Activated CD4-positive, alpha-beta T cell treated with anti-CD3 and anti-CD28 coated beads, Interleukin-2, amount 10 ng/mL, durations not matched to agents 24 days and 14 days (primary cell): ENCODE measurements at regions of chr3 and their contacts with region 1.

Region 1: GRCh38 chr3:129120254-129121004 is 1.2 kb downstream of the RAB43 start:
- DNase-seq: peak; percentile 98
- H3K4me3 Mint-ChIP-seq: peak overlapping the region; percentile 94
- H3K27ac Mint-ChIP-seq: peak overlapping the region; percentile 99
- H3K4me1 Mint-ChIP-seq: peaks cover 51% of the 10 kb centered on the region
- H3K27me3 Mint-ChIP-seq: no peaks in the 10 kb centered on the region

Region 2: DNA sequence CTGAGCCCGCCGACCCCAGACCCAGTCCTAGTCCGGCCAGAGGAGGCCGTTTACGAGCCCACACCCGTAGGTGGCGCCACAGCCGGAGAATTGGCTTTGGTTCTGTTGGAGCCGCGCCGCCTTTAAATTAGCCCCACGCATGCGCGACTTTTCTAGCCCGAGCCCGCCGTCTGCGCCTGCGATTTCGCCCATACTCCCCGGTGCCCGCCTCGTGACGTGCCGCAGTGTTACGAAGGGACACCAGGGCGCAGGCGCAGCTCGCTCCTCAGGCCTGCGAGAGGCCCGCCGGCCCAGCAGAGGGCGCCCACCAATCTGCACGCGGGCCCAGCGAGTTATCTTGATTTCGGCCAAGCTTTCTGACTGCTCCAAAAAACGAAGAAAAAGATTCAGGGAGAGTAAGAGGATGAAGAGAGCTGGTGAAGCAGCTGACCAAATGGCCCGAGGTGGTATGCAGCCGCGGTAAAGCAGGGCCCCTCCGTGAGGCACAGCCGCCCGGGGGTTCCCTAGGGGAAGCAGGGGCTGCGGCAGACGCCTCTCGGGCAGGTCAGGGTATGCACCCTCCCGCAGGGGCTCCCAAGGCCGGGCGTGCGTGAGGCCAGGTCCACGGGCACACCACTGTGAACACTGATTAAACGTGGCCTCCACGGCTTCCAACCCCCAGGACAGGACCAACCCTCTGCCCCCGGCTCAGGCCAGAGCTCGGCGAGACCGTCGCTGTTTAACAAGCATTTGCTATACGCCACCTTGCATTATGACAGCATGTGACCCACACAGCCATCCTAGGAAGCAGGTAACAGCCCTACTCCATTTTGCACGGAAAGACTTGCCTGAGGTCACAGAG is 502.7 kb before region 1 on chr3:
- intact Hi-C with region 1: loop called (anchors 5 kb)
- DNase-seq: peak; percentile 100
- H3K4me3 Mint-ChIP-seq: peak overlapping the region; percentile 95
- H3K27ac Mint-ChIP-seq: peak overlapping the region; percentile 96
- H3K4me1 Mint-ChIP-seq: peaks cover 34% of the 10 kb centered on the region
- H3K27me3 Mint-ChIP-seq: no peaks in the 10 kb centered on the region

Region 3: DNA sequence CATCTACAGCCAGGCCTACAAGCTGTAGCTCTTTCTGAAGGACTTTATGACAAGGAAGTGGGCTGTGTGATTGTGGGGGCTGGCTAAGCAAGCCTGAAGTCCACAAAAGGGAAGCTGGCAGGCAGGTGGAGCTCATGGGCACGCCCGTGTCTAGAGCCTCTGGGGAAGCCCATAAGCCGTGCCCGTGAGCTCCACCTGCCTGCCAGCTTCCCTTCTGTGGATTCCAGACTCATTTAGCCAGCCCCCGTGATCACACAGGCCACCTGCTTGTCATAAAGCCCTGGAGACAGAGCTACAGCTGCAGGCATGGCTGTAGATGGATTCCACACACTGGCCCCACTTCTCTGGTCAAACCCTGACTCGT is 104.1 kb before region 1 on chr3:
- intact Hi-C with region 1: loop called (anchors 5 kb)
- DNase-seq: peak; percentile 85
- H3K4me3 Mint-ChIP-seq: peak overlapping the region; percentile 80
- H3K27ac Mint-ChIP-seq: peak overlapping the region; percentile 95
- H3K4me1 Mint-ChIP-seq: peaks cover 26% of the 10 kb centered on the region
- H3K27me3 Mint-ChIP-seq: no peaks in the 10 kb centered on the region

Region 4: DNA sequence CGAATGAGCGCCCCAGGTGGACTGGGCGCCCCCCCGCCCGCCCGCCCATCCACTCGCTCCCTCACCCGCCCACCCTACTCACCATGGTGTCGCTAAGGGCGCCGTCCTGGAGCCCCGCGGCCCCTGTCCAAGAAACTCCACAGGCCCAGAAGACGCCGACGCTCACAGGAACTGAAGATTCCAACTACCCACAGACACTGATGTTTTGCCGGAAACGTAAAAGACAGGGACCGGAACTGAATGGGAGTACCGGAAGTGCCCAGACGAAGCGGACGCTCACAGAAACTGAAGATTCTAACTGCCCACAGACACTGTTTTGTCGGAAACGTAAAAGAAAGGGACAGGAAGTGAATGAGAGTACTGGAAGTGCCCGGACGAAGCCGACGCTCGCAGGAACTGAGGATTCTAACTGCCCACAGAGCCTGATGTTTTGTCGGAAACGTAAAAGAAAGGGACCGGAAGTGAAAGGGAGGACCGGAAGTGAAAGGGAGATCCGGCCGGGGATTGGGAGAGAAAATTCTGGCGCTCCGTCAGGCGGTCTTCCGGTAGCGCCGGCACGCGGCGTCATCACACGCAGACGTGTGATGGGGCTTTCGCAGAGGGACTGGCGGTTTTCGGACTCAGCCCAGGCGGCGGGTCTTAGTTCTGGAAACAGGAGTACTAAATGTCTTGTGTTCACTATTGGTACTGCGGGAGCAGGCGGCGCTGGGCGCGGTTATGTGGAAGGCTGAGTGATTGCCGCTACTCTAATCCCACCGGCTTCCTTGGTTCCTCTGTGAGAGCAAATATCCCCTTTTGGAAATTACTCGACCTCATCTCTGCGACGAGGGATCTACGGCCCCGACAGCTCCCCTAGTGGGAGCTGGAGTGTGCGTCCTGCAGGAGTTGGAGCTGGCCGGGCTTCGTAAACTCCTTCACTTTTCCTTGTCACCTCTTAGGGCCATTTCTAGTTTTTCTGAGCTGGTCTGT is 40.7 kb after region 1 on chr3 and contains the start of gene ISY1:
- intact Hi-C with region 1: loop called (anchors 1 kb)
- DNase-seq: peak; percentile 96
- H3K4me3 Mint-ChIP-seq: peak within 1 kb of the TSS; percentile 98
- H3K27ac Mint-ChIP-seq: peak within 1 kb of the TSS; percentile 98
- H3K4me1 Mint-ChIP-seq: peaks cover 31% of the 10 kb centered on the region
- H3K27me3 Mint-ChIP-seq: peaks cover 3% of the 10 kb centered on the region
- total RNA-seq, gene ISY1: 73.8 and 83.7 TPM in 2 replicates

Region 5: DNA sequence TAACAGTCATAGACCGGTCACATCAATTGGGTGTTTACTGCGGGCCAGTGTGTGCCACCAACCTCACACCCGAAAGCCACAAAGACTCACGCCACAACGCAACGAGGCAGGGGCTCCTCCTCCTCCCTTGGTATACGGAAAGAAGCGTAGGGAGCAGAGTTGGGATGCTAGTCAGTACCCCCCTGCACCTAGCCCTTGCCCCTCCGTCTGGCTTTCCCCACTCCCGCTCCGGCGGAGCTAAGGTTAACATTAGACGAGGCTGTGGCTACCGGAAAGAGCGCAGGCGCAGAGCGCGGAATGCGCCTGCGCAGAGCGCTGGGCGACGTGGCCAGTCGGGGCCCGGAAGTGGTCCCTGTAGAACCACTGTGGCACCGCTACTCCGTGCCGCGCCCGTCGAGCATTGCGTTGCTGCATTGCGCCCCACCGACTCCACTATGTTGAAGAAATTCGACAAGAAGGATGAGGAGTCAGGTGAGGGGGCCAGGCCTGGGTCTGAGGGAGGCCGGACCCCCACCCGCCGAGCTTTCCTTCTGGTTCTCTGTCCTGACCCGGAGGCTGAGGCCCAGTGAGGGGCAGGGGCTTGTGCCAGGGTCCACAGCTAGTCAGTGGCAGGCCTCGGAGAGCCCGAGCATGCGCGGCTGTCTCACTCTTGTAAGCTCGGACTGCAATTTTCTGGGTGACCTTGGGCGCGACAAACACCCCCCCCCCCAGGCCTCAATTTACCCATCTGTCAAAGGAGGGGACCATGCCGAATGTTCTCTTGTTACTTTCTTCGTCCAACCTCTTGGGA is 129.0 kb after region 1 on chr3 and contains the start of gene COPG1:
- intact Hi-C with region 1: loop called (anchors 1 kb)
- DNase-seq: peak; percentile 98
- H3K4me3 Mint-ChIP-seq: peak within 1 kb of the TSS; percentile 96
- H3K27ac Mint-ChIP-seq: peak within 1 kb of the TSS; percentile 99
- H3K4me1 Mint-ChIP-seq: peaks cover 41% of the 10 kb centered on the region
- H3K27me3 Mint-ChIP-seq: no peaks in the 10 kb centered on the region
- total RNA-seq, gene COPG1: 142 and 164 TPM in 2 replicates

Region 6: GRCh38 chr3:129439817-129440617 is 319.6 kb after region 1 on chr3 and contains the starts of genes IFT122 and MBD4:
- intact Hi-C with region 1: loop called (anchors 10 kb)
- DNase-seq: peak; percentile 100
- H3K4me3 Mint-ChIP-seq: peak within 1 kb of the TSS; percentile 94
- H3K27ac Mint-ChIP-seq: peak within 1 kb of the TSS; percentile 99
- H3K4me1 Mint-ChIP-seq: peaks cover 55% of the 10 kb centered on the region
- H3K27me3 Mint-ChIP-seq: no peaks in the 10 kb centered on the region
- total RNA-seq, gene IFT122: 12.3 and 13.7 TPM in 2 replicates
- total RNA-seq, gene MBD4: 40.8 and 50.7 TPM in 2 replicates